MCF 10A (cell line): ENCODE measurements at regions of chr18 and their contacts with region 1.

Region 1: GRCh38 chr18:47930931-47931717 is 665 bp upstream of the SMAD2 start:
- DNase-seq: peak; percentile 97
- H3K4me3 Mint-ChIP-seq: peak overlapping the region; percentile 86
- H3K27ac Mint-ChIP-seq: peak overlapping the region; percentile 91
- H3K4me1 Mint-ChIP-seq: peaks cover 37% of the 10 kb centered on the region
- H3K27me3 Mint-ChIP-seq: no peaks in the 10 kb centered on the region
- CTCF ChIP-seq: no peak

Region 2: GRCh38 chr18:47881752-47882455 is 49.2 kb before region 1 on chr18:
- CTCF ChIA-PET with region 1: interaction called, 4 read pairs
- POLR2A ChIA-PET with region 1: no interaction called
- intact Hi-C with region 1: loop called (anchors 1 kb)
- DNase-seq: peak; percentile 53
- H3K4me3 Mint-ChIP-seq: peak overlapping the region; percentile 36
- H3K27ac Mint-ChIP-seq: peak overlapping the region; percentile 67
- H3K4me1 Mint-ChIP-seq: peaks cover 25% of the 10 kb centered on the region
- H3K27me3 Mint-ChIP-seq: no peaks in the 10 kb centered on the region
- CTCF ChIP-seq: no peak

Region 3: DNA sequence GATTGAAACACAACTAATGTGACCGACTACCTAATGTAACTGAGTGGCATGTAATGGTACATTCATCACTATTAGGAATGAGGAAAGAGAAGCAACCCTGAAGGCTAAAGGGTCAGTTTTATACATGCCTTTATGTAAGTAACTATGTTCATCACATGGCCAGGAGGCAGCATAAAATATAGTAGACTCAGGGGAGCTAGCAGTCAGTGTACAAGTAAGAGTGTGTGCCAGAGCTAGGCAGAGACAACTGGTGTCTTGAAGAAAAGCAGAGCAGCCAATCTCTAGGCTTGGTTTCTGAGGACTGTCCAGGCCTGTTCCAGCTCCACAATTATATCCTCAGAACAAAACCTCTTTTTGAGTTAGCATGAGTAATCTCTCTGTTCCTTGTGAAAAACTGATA is 18.8 kb before region 1 on chr18:
- CTCF ChIA-PET with region 1: no interaction called
- POLR2A ChIA-PET with region 1: interaction called, 18 read pairs
- intact Hi-C with region 1: no loop called
- DNase-seq: no peak
- H3K4me3 Mint-ChIP-seq: no peak overlapping the region
- H3K27ac Mint-ChIP-seq: no peak overlapping the region
- H3K4me1 Mint-ChIP-seq: peaks cover 39% of the 10 kb centered on the region
- H3K27me3 Mint-ChIP-seq: no peaks in the 10 kb centered on the region
- CTCF ChIP-seq: no peak

Region 4: DNA sequence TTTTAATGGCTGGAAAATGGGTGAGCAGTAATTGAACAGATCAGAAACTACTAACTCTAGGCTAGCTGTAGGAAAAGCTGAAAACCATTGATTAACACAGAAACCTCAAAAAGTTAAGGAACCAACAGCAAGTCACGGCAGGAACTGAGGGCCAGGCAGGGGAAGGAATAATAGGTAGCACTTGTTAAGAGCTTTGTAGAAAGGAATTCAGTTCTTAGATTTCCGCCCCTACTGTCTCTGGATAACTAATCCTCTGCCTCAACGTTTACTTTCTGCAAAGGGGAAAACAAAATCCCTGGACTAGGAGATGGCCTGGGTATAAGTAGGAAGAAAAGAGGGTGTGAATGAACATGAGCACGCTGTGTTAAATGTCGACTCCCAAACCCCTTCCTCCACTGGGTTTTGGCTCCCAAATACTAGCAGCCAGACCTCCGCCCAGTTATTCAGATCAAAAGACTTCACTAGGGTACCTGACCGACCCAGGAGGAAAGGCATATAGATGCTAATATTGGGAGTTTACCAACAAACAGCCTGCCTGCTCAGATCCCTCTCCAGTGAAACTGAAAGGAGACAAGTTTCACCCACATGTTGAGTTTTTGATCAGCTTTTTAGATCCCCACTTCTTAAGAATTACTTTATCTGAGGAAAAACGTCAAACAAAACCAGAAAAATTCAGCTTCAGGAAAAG is 13.1 kb before region 1 on chr18:
- CTCF ChIA-PET with region 1: interaction called, 3 read pairs
- POLR2A ChIA-PET with region 1: interaction called, 18 read pairs
- intact Hi-C with region 1: no loop called
- DNase-seq: no peak
- H3K4me3 Mint-ChIP-seq: no peak overlapping the region
- H3K27ac Mint-ChIP-seq: peak overlapping the region; percentile 37
- H3K4me1 Mint-ChIP-seq: peaks cover 45% of the 10 kb centered on the region
- H3K27me3 Mint-ChIP-seq: no peaks in the 10 kb centered on the region
- CTCF ChIP-seq: no peak

Region 5: DNA sequence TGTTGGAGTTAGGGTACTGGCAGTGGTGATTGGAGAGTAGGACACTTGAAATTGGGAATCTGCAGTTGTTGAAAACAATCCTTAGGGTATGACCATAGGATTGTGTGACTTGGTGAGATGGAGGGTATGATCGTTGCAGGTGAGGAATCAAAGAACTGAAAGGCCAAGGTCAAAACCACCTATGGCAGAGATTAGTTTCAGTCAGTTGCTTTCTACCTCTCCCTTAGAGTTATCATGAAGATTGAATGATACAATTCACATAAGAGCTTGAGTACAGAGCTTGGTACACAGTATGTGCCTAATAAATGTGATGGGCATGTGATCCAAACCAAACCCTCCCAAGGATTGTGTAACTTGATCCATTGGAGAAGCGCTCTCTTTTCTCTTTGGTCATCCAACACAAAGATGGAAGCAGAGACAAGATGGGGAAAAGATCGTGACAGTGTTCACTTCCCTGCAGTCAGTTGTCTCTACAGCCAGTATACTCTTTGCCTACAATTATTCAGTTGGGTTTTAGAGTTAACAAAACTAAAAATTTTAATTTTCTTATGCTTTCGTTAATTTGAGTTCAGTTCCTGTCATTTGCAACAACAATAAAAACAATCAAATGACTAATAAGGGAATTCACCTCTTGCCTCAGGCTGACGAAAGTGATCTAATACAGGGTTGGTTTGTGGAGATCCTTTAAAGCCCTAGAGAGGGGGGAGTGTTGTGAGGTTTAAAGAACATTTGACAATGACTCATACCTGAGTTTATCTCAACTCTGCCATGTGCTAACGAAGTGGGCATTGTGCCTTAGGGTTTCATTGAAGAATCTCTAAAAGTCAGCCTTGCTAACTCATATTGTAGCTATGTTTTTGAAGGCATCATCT is 14.1 kb after region 1 on chr18:
- CTCF ChIA-PET with region 1: no interaction called
- POLR2A ChIA-PET with region 1: interaction called, 30 read pairs
- intact Hi-C with region 1: no loop called
- DNase-seq: peak; percentile 93
- H3K4me3 Mint-ChIP-seq: peak overlapping the region; percentile 47
- H3K27ac Mint-ChIP-seq: peak overlapping the region; percentile 42
- H3K4me1 Mint-ChIP-seq: peaks cover 13% of the 10 kb centered on the region
- H3K27me3 Mint-ChIP-seq: no peaks in the 10 kb centered on the region
- CTCF ChIP-seq: no peak

Region 6: DNA sequence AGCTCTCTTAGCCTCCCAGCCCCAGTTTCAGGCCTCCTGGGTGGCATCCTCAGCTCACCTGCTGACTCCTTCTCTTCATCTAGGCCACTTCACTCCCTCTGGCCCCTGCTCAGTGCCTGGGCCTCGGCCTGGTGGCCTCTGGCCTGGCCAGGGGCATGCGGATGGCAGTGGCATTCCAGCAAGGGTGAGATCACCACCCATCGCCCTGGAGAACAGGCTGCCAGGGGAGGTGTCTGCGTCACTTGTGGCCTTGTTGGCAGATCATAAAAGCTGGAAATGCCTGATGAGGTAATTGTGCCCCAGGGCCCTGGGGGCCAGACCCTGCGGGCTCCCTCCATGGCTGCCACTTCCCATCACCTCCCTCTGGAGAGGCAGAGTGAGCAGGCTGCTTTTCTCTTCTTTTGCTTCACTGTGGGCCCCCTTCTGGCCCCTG is 71.8 kb after region 1 on chr18:
- CTCF ChIA-PET with region 1: interaction called, 5 read pairs
- POLR2A ChIA-PET with region 1: interaction called, 4 read pairs
- intact Hi-C with region 1: loop called (anchors 5 kb)
- DNase-seq: peak; percentile 92
- H3K4me3 Mint-ChIP-seq: peak overlapping the region; percentile 10
- H3K27ac Mint-ChIP-seq: peak overlapping the region; percentile 82
- H3K4me1 Mint-ChIP-seq: peaks cover 13% of the 10 kb centered on the region
- H3K27me3 Mint-ChIP-seq: no peaks in the 10 kb centered on the region
- CTCF ChIP-seq: no peak